AG04450 (cell line): ENCODE measurements at regions of chr7 and their contacts with region 1.

Region 1: GRCh38 chr7:129875745-129876411 is 76.9 kb downstream of the UBE2H start:
- DNase-seq: no peak
- H3K4me3 ChIP-seq: no peak overlapping the region
- H3K27ac ChIP-seq: peak overlapping the region; percentile 68
- H3K27me3 ChIP-seq: no peaks in the 10 kb centered on the region
- CTCF ChIP-seq: no peak

Region 2: DNA sequence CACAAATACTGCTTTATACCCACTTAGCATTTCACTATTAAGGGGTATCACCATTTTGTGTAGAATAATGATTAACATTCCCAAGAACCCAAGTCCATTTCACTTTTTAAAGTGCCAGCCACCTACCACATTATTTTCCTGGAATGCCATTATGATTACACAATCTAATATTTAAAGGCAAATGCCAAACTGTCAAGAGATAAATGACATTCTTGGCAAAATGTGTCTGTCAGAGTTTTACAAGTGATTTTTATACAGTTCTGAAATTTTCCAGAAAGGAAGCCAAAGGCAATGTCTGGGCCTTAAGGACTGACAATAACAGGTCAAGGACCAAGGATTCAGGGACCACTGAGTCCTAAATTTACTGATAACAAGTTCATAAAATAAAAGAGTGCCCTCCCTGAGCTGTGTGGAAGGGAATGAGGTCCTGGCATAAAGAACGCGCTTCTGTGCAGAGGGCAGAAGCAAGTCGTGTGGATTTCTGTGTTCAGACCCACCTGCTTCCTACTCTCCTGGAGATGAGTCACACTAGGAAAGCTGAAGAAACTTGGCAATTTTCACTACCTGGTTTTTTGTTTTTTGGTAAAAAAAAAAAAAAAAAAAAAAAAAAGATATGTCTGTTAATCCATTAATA is 10.4 kb after region 1 on chr7:
- CTCF ChIA-PET with region 1: no interaction called
- POLR2A ChIA-PET with region 1: interaction called, 10 read pairs
- DNase-seq: no peak
- H3K4me3 ChIP-seq: no peak overlapping the region
- H3K27ac ChIP-seq: no peak overlapping the region
- H3K27me3 ChIP-seq: no peaks in the 10 kb centered on the region
- CTCF ChIP-seq: no peak